Sciatic nerve (tissue), 2 donors: ENCODE measurements at regions of chr13 and their contacts with region 1.

Region 1: DNA sequence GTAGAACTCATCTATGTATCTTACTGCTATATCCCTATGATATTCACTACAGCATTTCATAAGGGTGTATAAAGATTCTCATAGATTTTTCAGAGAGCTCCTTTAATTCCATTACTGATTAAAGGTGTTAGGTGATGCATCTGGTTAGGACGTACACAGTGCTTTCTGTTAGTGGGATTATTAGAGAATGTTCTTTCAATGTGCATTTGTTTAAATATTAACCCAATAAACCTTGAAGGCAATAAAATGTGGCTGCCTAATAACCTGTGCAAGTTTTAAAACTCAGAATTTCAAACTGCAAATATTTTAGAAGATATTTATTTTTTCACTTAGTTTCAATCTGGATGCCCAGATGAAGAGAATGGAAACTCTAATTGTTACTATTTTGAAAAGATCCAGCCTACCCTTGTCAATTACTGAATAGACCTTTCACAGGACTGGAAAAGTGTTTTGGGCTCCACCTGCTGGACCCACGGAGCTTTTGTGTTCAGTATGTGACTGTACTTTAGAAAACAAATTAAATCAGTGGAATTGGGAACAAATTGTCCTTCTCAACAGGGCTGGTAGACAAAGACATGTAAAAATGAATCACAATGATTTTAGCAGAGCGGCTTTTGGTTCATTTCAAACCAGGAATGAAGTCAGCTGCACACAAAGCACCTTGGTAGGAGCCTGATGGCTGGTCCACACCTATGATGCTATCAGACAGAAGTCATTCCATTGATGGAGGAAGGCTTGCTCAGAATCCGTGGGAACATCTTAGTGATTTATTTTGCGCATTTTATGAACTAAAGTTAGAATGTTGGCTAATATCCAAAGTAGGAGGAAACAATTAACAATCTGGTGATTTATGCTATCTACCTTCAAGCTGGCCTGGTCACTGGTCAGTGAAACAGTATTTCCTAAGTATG is 89.4 kb upstream of the RAP2A start:
- DNase-seq: peak; percentile 81
- ATAC-seq: peak; percentile 87

Region 2: GRCh38 chr13:96093296-96094006 is 1251.1 kb before region 1 on chr13:
- intact Hi-C with region 1: no loop called
- DNase-seq: no peak
- ATAC-seq: no peak

Region 3: GRCh38 chr13:96551546-96551945 is 793.0 kb before region 1 on chr13:
- intact Hi-C with region 1: no loop called
- DNase-seq: no peak
- ATAC-seq: no peak

Region 4: DNA sequence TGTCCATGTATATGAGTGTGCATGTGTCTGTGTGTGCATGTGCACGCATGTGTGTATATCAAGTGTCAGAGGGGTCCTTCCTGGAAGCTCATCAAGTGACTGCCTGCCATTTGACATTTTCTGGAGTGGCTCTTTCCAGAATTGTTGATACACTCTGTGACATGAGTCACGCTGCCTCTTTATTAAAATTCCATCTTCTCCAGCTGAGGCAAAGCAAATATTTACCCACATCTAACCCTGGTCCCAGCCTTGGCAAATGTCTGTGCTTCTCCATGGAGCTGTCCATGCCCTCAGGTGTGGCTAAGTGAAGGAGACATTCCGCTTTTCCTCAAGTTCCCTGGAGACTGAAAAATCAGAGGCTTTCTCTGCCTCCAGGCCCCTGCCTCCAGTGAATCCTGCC is 210.6 kb before region 1 on chr13:
- intact Hi-C with region 1: no loop called
- DNase-seq: no peak
- ATAC-seq: no peak

Region 5: GRCh38 chr13:97221989-97222700 is 122.4 kb before region 1 on chr13 and contains the start of gene MBNL2:
- intact Hi-C with region 1: loop called (anchors 10 kb)
- DNase-seq: peak; percentile 92
- ATAC-seq: peak; percentile 97
- total RNA-seq, gene MBNL2: 102 TPM